Psoas muscle (tissue), 8 donors: ENCODE measurements at regions of chr17 and their contacts with region 1.

Region 1: GRCh38 chr17:79087428-79088143 is 13.0 kb downstream of the ENGASE start:
- DNase-seq: peak; percentile 65 to 88
- ATAC-seq: peak; percentile 62 to 79 (median 74)
- H3K4me3 ChIP-seq: no peak overlapping the region
- H3K27ac ChIP-seq: no peak overlapping the region
- H3K4me1 ChIP-seq: peaks cover 5% of the 10 kb centered on the region
- H3K27me3 ChIP-seq: peaks cover 0 to 20% (median 0%) of the 10 kb centered on the region in 3 donors
- CTCF ChIP-seq: peak; percentile 92

Region 2: DNA sequence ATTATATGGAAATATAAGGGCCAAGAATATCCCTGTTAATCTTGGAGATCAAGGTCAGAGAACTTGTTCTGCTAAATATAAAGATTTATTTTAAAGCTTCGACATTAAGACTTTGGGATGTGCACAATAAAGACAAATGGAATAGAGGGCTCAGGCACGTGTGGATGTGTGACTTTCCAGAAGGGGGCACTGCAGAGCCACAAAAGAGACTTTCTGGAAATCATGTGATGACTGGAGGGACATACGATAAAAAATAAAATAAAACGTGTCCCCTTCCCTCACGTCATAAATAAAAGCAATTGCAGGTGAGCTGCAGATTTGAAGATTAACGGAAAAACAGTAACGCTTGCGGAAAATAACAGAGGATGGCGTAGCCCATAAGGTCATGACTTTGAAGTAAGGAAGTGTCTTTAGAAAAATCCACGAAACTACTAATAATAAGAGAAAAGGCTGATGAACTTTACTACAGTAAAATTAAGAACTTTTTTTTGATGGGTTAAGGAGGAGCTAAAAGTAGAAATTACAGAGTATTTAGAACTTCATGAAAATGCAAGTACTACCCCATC is 22.4 kb before region 1 on chr17:
- intact Hi-C with region 1: loop called (anchors 1 to 2 kb)
- DNase-seq: no peak
- ATAC-seq: peak; percentile 60 to 86 (median 74)
- H3K4me3 ChIP-seq: no peak overlapping the region
- H3K27ac ChIP-seq: no peak overlapping the region
- H3K4me1 ChIP-seq: no peaks in the 10 kb centered on the region
- H3K27me3 ChIP-seq: no peaks in the 10 kb centered on the region
- CTCF ChIP-seq: peak; percentile 73